ENCODE measurements at regions of chr19 and their contacts with region 1.

Region 1: GRCh38 chr19:17996826-17997316 is 11.1 kb upstream of the ARRDC2 start:
- DNase-seq: peak; percentile 75 to 96 (median 90)
- ATAC-seq: peak; percentile 81 to 85 (median 84)
- H3K4me3 ChIP-seq: no peak overlapping the region
- H3K27ac ChIP-seq: no peak overlapping the region
- H3K4me1 ChIP-seq: no peaks in the 10 kb centered on the region
- H3K27me3 ChIP-seq: peaks cover 0 to 4% (median 0%) of the 10 kb centered on the region in 4 donors
- CTCF ChIP-seq: peak; percentile 92 to 98 (median 98)

Region 2: GRCh38 chr19:17938092-17938845 is 58.6 kb before region 1 on chr19:
- intact Hi-C with region 1: loop called (anchors 2 to 5 kb)
- DNase-seq: peak; percentile 50 to 91 (median 80)
- ATAC-seq: peak; percentile 75 to 97 (median 92)
- H3K4me3 ChIP-seq: no peak overlapping the region
- H3K27ac ChIP-seq: no peak overlapping the region
- H3K4me1 ChIP-seq: peaks cover 0 to 7% (median 7%) of the 10 kb centered on the region in 3 donors
- H3K27me3 ChIP-seq: no peaks in the 10 kb centered on the region
- CTCF ChIP-seq: peak; percentile 81 to 87 (median 84)

Region 3: DNA sequence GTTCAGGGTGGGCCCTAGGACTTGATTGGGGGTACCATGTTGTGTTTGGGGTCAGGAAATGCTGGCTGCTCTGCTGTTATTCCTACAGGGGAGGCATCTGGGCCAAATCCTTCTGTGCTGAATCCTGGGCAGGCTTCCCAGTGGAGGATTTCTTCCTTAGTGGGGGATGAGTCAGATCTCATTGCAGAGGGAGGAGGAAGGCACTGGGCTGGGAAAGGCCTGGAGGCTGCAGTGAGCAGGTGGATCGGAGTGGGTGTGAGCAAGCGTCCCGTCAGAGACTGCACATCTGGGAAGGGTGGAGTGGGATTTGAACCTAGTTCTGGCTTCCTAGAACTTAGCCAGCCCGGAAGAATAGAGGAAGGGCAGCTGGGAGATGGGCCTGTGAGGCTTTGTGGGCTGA is 52.6 kb before region 1 on chr19:
- intact Hi-C with region 1: loop called (anchors 2 to 5 kb)
- DNase-seq: no peak
- ATAC-seq: no peak
- H3K4me3 ChIP-seq: no peak overlapping the region
- H3K27ac ChIP-seq: no peak overlapping the region
- H3K4me1 ChIP-seq: peaks cover 0 to 8% (median 0%) of the 10 kb centered on the region in 3 donors
- H3K27me3 ChIP-seq: no peaks in the 10 kb centered on the region
- CTCF ChIP-seq: no peak

Region 4: GRCh38 chr19:18044825-18045304 is 48.0 kb after region 1 on chr19:
- intact Hi-C with region 1: no loop called
- DNase-seq: peak; percentile 56 to 86 (median 74)
- ATAC-seq: peak; percentile 67 to 89 (median 88)
- H3K4me3 ChIP-seq: peak overlapping the region in 2 of 4 donors; percentile 30 to 41
- H3K27ac ChIP-seq: peak overlapping the region; percentile 31 to 90 (median 75)
- H3K4me1 ChIP-seq: peaks cover 0 to 20% (median 4%) of the 10 kb centered on the region in 3 donors
- H3K27me3 ChIP-seq: no peaks in the 10 kb centered on the region
- CTCF ChIP-seq: no peak

Region 5: GRCh38 chr19:18152444-18152816 is 155.6 kb after region 1 on chr19:
- intact Hi-C with region 1: no loop called
- DNase-seq: peak; percentile 88 to 98 (median 95)
- ATAC-seq: peak; percentile 64 to 82 (median 73)
- H3K4me3 ChIP-seq: peak overlapping the region; percentile 6 to 86 (median 74)
- H3K27ac ChIP-seq: peak overlapping the region; percentile 80 to 92 (median 89)
- H3K4me1 ChIP-seq: peaks cover 13 to 23% (median 18%) of the 10 kb centered on the region in 3 donors
- H3K27me3 ChIP-seq: no peaks in the 10 kb centered on the region
- CTCF ChIP-seq: peak in 3 of 4 donors; percentile 11 to 41 (median 22)